ENCODE measurements at regions of chr11 and their contacts with region 1.

Region 1: DNA sequence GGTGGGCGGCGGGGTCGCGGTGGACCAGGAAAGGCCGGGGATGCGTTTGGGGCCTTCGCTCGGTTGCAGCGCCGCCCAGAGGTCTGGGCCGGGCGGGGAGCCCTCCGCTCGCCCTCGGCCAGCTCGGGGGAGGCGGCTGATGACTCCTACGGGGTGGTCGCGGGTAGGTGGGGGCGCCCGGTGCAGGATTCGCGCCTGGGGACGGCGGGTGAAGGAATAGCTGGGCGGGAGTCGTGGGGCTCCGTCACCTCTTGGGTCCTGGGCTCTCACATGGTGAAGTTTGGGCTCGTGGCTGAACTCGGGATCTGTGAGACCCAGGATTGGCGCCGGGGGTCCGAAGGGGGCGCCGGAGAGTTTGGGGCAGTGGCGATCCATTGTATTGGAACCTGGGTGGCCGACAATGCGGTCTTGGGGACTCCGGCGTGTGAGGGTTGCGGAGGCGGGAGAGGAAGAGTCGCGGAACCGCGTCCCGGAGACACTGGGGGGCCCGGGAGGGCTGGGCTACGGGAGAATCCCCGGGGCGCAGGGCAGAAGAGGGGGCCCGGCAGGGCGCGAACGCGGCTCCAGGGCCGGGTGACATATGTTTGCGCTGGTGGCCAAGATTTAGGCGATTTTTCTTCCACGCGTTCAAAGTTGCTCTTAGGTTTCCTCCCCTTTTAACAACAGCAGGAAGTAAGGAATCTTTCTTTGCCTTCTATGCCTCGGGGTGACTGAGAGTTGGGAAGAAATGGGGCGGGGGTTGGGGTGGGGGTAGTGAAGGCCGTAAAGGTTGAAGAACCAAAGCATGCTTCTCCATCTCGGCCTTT is 935 bp downstream of the QSER1 start:
- DNase-seq: no peak

Region 2: GRCh38 chr11:33039274-33040032 is 145.9 kb after region 1 on chr11 and contains the start of gene TCP11L1:
- intact Hi-C with region 1: loop called (anchors 5 kb)
- DNase-seq: peak; percentile 96
- total RNA-seq, gene TCP11L1: 9.0 TPM